ENCODE measurements at regions of chr17 and their contacts with region 1.

Region 1: DNA sequence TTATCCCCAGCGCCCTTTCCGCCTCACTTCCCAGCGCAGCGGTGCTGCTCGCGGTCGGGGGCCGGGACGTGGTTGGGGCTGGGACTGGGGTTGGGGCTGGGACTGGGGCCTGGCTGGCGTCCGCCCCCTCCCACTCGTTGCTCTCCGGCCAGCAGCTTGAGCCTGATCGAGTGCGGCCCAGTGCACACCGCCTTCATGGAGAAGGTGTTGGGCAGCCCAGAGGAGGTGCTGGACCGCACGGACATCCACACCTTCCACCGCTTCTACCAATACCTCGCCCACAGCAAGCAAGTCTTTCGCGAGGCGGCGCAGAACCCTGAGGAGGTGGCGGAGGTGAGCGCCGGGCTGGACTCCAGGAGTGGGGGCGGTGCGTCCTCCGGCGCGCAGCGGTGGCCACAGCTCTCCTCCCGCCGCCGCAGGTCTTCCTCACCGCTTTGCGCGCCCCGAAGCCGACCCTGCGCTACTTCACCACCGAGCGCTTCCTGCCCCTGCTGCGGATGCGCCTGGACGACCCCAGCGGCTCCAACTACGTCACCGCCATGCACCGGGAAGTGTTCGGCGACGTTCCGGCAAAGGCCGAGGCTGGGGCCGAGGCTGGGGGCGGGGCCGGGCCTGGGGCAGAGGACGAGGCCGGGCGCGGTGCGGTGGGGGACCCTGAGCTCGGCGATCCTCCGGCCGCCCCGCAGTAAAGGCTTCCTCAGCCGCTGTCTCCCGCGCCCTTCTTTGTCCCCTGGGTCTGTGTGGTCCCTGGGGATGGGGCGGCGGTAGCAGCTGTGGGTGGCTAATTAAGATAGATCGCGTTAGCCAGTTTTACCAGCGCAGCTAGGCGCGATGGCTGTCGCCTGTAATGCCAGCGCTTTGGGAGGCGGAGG is 1.8 kb downstream of the HSD17B1 start:
- DNase-seq: peak in 1 of 2 experiments; percentile 95
- H3K4me3 ChIP-seq: peak overlapping the region; percentile 61 to 84 (median 71)
- H3K27ac ChIP-seq: peak overlapping the region; percentile 53; the same call in 1 of the 2 replicates
- H3K4me1 ChIP-seq: peaks cover 0 to 9% (median 6%) of the 10 kb centered on the region in 4 experiments; a peak in 6 of 7 replicates
- H3K27me3 ChIP-seq: no peaks in the 10 kb centered on the region; a peak in 1 of 7 replicates
- CTCF ChIP-seq: no peak
- EP300 ChIP-seq: no peak
- POLR2A ChIP-seq: peak in 1 of 2 experiments; percentile 70; a peak in 2 of 3 replicates
- RAD21 ChIP-seq: no peak

Region 2: GRCh38 chr17:42566883-42567573 is 12.5 kb after region 1 on chr17 and contains the start of gene MLX:
- CTCF ChIA-PET with region 1: interaction called, 15 read pairs
- POLR2A ChIA-PET with region 1: interaction called, 15 read pairs
- DNase-seq: peak; percentile 79 to 99
- H3K4me3 ChIP-seq: peak within 1 kb of the TSS; percentile 44 to 81 (median 74)
- H3K27ac ChIP-seq: peak within 1 kb of the TSS; percentile 63
- H3K4me1 ChIP-seq: peaks cover 0 to 21% (median 9%) of the 10 kb centered on the region in 4 experiments; a peak in 5 of 7 replicates
- H3K27me3 ChIP-seq: no peaks in the 10 kb centered on the region
- CTCF ChIP-seq: no peak
- EP300 ChIP-seq: no peak
- POLR2A ChIP-seq: peak in 1 of 2 experiments; percentile 11; a peak in 1 of 3 replicates
- RAD21 ChIP-seq: no peak
- total RNA-seq, gene MLX: 27.5 and 34.2 TPM in 2 replicates

Measured in H1 (cell line).